A673 (cell line): ENCODE measurements at regions of chr9 and their contacts with region 1.

Region 1: GRCh38 chr9:14428781-14429230 is 114.9 kb upstream of the NFIB start:
- DNase-seq: peak; percentile 77
- H3K4me3 ChIP-seq: no peak overlapping the region
- H3K27ac ChIP-seq: no peak overlapping the region
- H3K4me1 ChIP-seq: peaks cover 6% of the 10 kb centered on the region
- H3K27me3 ChIP-seq: no peaks in the 10 kb centered on the region
- CTCF ChIP-seq: peak; percentile 65

Region 2: GRCh38 chr9:13033959-13034693 is 1394.7 kb before region 1 on chr9:
- CTCF ChIA-PET with region 1: no interaction called
- POLR2A ChIA-PET with region 1: no interaction called
- intact Hi-C with region 1: loop called (anchors 5 kb)
- DNase-seq: peak; percentile 80
- H3K4me3 ChIP-seq: peak overlapping the region; percentile 17
- H3K27ac ChIP-seq: no peak overlapping the region
- H3K4me1 ChIP-seq: no peaks in the 10 kb centered on the region
- H3K27me3 ChIP-seq: no peaks in the 10 kb centered on the region
- CTCF ChIP-seq: peak; percentile 82

Region 3: GRCh38 chr9:14096258-14096922 is 332.4 kb before region 1 on chr9:
- CTCF ChIA-PET with region 1: no interaction called
- POLR2A ChIA-PET with region 1: no interaction called
- intact Hi-C with region 1: loop called (anchors 10 kb)
- DNase-seq: peak; percentile 90
- H3K4me3 ChIP-seq: peak overlapping the region; percentile 25
- H3K27ac ChIP-seq: peak overlapping the region; percentile 95
- H3K4me1 ChIP-seq: peaks cover 47% of the 10 kb centered on the region
- H3K27me3 ChIP-seq: no peaks in the 10 kb centered on the region
- CTCF ChIP-seq: no peak